HepG2 (cell line): ENCODE measurements at regions of chr4 and their contacts with region 1.

Region 1: GRCh38 chr4:23775694-23776093 is 114.2 kb downstream of the PPARGC1A start:
- DNase-seq: peak; percentile 37
- ATAC-seq: peak; percentile 86
- H3K4me3 ChIP-seq: no peak overlapping the region
- H3K27ac ChIP-seq: no peak overlapping the region
- H3K4me1 ChIP-seq: no peaks in the 10 kb centered on the region
- H3K27me3 ChIP-seq: no peaks in the 10 kb centered on the region
- CTCF ChIP-seq: peak; percentile 44; the same call in 1 of the 2 replicates
- EP300 ChIP-seq: no peak
- POLR2A ChIP-seq: no peak
- RAD21 ChIP-seq: peak; percentile 18; the same call in 1 of the 2 replicates

Region 2: GRCh38 chr4:23737571-23737970 is 38.1 kb before region 1 on chr4:
- CTCF ChIA-PET with region 1: no interaction called
- POLR2A ChIA-PET with region 1: no interaction called
- in situ Hi-C with region 1: no loop called
- intact Hi-C with region 1: no loop called
- DNase-seq: no peak
- ATAC-seq: no peak
- H3K4me3 ChIP-seq: no peak overlapping the region
- H3K27ac ChIP-seq: no peak overlapping the region
- H3K4me1 ChIP-seq: no peaks in the 10 kb centered on the region
- H3K27me3 ChIP-seq: no peaks in the 10 kb centered on the region
- CTCF ChIP-seq: no peak
- EP300 ChIP-seq: no peak
- POLR2A ChIP-seq: no peak
- RAD21 ChIP-seq: no peak

Region 3: DNA sequence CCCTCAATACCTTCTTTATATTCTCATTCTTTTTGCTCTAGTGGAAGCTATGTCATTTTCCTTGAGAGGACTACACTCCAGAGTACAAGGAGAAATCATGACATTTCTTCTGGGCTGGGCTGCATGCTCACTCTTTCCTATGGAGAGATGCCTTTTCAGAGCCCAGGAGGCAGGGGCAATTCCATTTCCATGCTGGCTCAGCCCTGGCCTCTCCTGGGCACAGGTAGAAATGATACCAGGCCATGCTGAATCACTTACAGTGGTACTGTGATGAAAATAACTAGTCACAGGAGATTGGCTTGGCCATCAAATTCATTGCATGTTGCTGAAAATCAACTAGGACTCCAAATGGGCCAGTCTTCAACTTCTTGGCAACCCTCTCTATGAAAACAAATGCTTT is 148.1 kb after region 1 on chr4:
- CTCF ChIA-PET with region 1: no interaction called
- POLR2A ChIA-PET with region 1: no interaction called
- in situ Hi-C with region 1: no loop called
- intact Hi-C with region 1: loop called (anchors 2 kb)
- DNase-seq: peak; percentile 8
- ATAC-seq: peak; percentile 90
- H3K4me3 ChIP-seq: no peak overlapping the region
- H3K27ac ChIP-seq: no peak overlapping the region
- H3K4me1 ChIP-seq: peaks cover 26% of the 10 kb centered on the region
- H3K27me3 ChIP-seq: peaks cover 0 to 16% of the 10 kb centered on the region in 2 experiments; a peak in 3 of 5 replicates
- CTCF ChIP-seq: peak; percentile 54
- EP300 ChIP-seq: no peak
- POLR2A ChIP-seq: no peak
- RAD21 ChIP-seq: no peak

Region 4: GRCh38 chr4:23966725-23967124 is 191.0 kb after region 1 on chr4:
- CTCF ChIA-PET with region 1: no interaction called
- POLR2A ChIA-PET with region 1: no interaction called
- in situ Hi-C with region 1: no loop called
- intact Hi-C with region 1: loop called (anchors 5 kb)
- DNase-seq: peak; percentile 20
- ATAC-seq: peak; percentile 54
- H3K4me3 ChIP-seq: no peak overlapping the region
- H3K27ac ChIP-seq: no peak overlapping the region
- H3K4me1 ChIP-seq: peaks cover 30% of the 10 kb centered on the region
- H3K27me3 ChIP-seq: 0 out of 5 replicates have a peak, but pooled peaks cover 1 to 4% of the 10 kb centered on the region in 2 experiments
- CTCF ChIP-seq: peak; percentile 58
- EP300 ChIP-seq: no peak
- POLR2A ChIP-seq: no peak
- RAD21 ChIP-seq: no peak